Activated naive CD4-positive, alpha-beta T cell treated with anti-CD3 and anti-CD28 coated beads for 36 hours (primary cell): ENCODE measurements at regions of chr3 and their contacts with region 1.

Region 1: GRCh38 chr3:189148081-189148507 is 23.7 kb upstream of the TPRG1 start:
- DNase-seq: peak; percentile 85
- H3K4me3 Mint-ChIP-seq: no peak overlapping the region
- H3K27ac Mint-ChIP-seq: no peak overlapping the region
- H3K4me1 Mint-ChIP-seq: peaks cover 9% of the 10 kb centered on the region
- H3K27me3 Mint-ChIP-seq: peaks cover 9% of the 10 kb centered on the region

Region 2: GRCh38 chr3:187616307-187616972 is 1531.7 kb before region 1 on chr3:
- CTCF ChIA-PET with region 1: no interaction called
- intact Hi-C with region 1: loop called (anchors 5 kb)
- DNase-seq: peak; percentile 79
- H3K4me3 Mint-ChIP-seq: no peak overlapping the region
- H3K27ac Mint-ChIP-seq: no peak overlapping the region
- H3K4me1 Mint-ChIP-seq: no peaks in the 10 kb centered on the region
- H3K27me3 Mint-ChIP-seq: peaks cover 4% of the 10 kb centered on the region

Region 3: GRCh38 chr3:188584162-188584529 is 563.9 kb before region 1 on chr3:
- CTCF ChIA-PET with region 1: no interaction called
- intact Hi-C with region 1: loop called (anchors 10 kb)
- DNase-seq: peak; percentile 61
- H3K4me3 Mint-ChIP-seq: no peak overlapping the region
- H3K27ac Mint-ChIP-seq: no peak overlapping the region
- H3K4me1 Mint-ChIP-seq: peaks cover 15% of the 10 kb centered on the region
- H3K27me3 Mint-ChIP-seq: no peaks in the 10 kb centered on the region

Region 4: DNA sequence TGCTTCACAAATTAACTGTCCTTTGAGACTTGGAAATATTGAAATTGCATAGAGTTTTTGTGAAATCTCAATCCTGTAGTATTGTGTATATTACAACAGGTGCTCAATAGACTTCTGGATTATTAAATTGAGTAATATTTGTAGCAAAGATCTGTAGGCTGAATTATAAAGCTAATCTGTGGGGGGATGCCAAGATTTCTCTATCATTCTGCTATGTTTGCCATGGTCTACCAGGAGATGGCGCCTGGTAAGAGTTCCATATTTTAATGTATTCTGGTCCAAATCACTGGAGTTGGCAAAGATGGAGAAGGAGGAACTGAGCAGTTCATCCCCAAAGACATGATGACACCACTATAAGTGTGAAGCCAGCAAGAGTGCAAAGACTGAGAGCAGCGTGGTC is 317.2 kb before region 1 on chr3:
- CTCF ChIA-PET with region 1: no interaction called
- intact Hi-C with region 1: loop called (anchors 5 kb)
- DNase-seq: peak; percentile 7
- H3K4me3 Mint-ChIP-seq: no peak overlapping the region
- H3K27ac Mint-ChIP-seq: no peak overlapping the region
- H3K4me1 Mint-ChIP-seq: peaks cover 21% of the 10 kb centered on the region
- H3K27me3 Mint-ChIP-seq: no peaks in the 10 kb centered on the region

Region 5: DNA sequence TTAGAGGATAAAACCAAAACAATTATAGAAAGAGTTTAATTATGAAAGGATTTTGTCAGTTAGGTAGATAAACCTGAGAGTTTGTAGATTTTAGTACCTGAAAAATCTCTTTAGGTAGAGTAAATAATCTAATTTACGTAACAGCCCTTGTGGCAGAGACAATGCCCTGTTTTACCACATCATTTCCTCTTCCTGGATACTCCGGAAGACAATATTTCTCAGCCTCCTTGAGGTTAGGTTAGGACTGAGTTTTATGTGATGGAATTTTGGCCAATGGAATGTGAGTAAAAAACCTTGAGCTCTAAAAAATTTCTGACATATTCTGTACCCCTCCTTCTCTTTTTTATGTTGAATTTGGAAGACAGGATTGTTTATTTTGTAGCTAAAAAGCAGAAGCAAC is 27.0 kb before region 1 on chr3:
- CTCF ChIA-PET with region 1: no interaction called
- intact Hi-C with region 1: no loop called
- DNase-seq: no peak
- H3K4me3 Mint-ChIP-seq: no peak overlapping the region
- H3K27ac Mint-ChIP-seq: no peak overlapping the region
- H3K4me1 Mint-ChIP-seq: no peaks in the 10 kb centered on the region
- H3K27me3 Mint-ChIP-seq: no peaks in the 10 kb centered on the region

Region 6: GRCh38 chr3:189132231-189132707 is 15.8 kb before region 1 on chr3:
- CTCF ChIA-PET with region 1: interaction called, 12 read pairs
- intact Hi-C with region 1: no loop called
- DNase-seq: peak; percentile 91
- H3K4me3 Mint-ChIP-seq: peak overlapping the region; percentile 41
- H3K27ac Mint-ChIP-seq: peak overlapping the region; percentile 76
- H3K4me1 Mint-ChIP-seq: peaks cover 21% of the 10 kb centered on the region
- H3K27me3 Mint-ChIP-seq: no peaks in the 10 kb centered on the region

Region 7: DNA sequence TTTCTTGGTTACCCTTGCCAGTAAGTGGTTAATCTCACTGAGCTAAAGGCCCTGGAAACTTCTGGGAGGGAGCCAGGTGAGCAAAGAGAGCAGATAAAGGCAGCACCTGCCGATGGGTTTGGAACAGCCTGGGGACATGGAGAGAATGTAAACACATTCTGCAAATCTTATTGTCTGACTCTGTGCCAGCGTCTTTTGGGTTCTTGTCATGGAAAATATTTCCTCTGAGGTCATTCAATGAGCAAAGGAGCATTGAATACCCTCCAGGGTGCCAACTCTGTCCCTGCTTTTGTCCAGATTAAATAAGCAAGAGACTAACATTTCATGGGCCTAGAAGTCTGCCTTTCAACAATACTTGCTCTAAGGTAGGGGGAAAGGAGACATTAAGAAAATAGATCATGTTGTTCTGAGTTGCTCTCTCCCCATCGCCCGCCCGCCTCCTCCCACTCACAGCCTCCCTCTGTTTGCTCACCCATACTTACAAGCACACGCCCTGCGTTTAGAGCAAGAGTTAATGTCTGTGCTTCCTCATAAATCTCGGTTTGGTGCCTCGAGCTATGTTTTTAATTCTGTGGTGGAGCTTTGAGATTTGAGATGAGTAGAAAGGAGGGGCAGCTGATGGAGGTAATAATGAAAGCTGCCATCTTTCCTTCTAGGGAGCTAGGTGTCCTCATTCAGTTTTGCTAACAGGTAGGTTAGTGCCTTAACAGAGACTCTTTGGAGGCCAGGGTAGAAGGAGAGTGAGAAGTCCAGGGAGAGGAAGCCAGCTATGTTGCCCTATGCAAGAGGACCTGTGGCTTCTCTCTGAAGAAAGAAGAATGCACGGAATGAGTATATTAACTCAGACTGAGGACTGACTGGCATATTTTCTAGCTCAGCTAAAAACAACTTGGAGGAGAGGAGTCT is 156.6 kb after region 1 on chr3:
- CTCF ChIA-PET with region 1: no interaction called
- intact Hi-C with region 1: no loop called
- DNase-seq: peak; percentile 59
- H3K4me3 Mint-ChIP-seq: peak overlapping the region; percentile 17
- H3K27ac Mint-ChIP-seq: peak overlapping the region; percentile 68
- H3K4me1 Mint-ChIP-seq: peaks cover 57% of the 10 kb centered on the region
- H3K27me3 Mint-ChIP-seq: no peaks in the 10 kb centered on the region